Common myeloid progenitor, CD34-positive (primary cell): ENCODE measurements at regions of chr17 and their contacts with region 1.

Region 1: GRCh38 chr17:74864866-74865395 is 5.2 kb upstream of the GRIN2C start:
- DNase-seq: peak; percentile 55 to 76 (median 66)
- H3K4me3 ChIP-seq: no peak overlapping the region
- H3K27ac ChIP-seq: no peak overlapping the region
- H3K4me1 ChIP-seq: peaks cover 0 to 32% (median 20%) of the 10 kb centered on the region in 4 experiments
- H3K27me3 ChIP-seq: peaks cover 0 to 25% (median 12%) of the 10 kb centered on the region in 5 experiments

Region 2: DNA sequence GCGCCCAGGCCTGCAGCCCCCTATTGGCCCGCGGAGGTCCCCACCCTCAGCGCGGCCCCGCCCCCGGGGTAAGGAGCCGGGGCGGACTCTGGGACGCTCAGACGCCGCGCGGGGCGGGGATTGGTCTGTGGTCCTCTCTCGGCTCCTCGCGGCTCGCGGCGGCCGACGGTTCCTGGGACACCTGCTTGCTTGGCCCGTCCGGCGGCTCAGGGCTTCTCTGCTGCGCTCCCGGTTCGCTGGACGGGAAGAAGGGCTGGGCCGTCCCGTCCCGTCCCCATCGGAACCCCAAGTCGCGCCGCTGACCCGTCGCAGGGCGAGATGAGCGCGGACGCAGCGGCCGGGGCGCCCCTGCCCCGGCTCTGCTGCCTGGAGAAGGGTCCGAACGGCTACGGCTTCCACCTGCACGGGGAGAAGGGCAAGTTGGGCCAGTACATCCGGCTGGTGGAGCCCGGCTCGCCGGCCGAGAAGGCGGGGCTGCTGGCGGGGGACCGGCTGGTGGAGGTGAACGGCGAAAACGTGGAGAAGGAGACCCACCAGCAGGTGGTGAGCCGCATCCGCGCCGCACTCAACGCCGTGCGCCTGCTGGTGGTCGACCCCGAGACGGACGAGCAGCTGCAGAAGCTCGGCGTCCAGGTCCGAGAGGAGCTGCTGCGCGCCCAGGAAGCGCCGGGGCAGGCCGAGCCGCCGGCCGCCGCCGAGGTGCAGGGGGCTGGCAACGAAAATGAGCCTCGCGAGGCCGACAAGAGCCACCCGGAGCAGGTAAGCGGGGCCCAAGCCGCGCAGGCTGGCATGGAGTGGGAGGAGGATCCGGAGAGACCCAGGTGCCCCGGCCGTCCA is 116.2 kb before region 1 on chr17 and contains the start of gene NHERF1:
- CTCF ChIA-PET with region 1: interaction called, 15 read pairs
- POLR2A ChIA-PET with region 1: no interaction called
- DNase-seq: peak; percentile 90 to 94 (median 94)
- H3K4me3 ChIP-seq: peak within 1 kb of the TSS; percentile 81 to 98 (median 96)
- H3K27ac ChIP-seq: peak within 1 kb of the TSS; percentile 54 to 81
- H3K4me1 ChIP-seq: peaks cover 18 to 84% (median 80%) of the 10 kb centered on the region in 4 experiments
- H3K27me3 ChIP-seq: no peaks in the 10 kb centered on the region

Region 3: DNA sequence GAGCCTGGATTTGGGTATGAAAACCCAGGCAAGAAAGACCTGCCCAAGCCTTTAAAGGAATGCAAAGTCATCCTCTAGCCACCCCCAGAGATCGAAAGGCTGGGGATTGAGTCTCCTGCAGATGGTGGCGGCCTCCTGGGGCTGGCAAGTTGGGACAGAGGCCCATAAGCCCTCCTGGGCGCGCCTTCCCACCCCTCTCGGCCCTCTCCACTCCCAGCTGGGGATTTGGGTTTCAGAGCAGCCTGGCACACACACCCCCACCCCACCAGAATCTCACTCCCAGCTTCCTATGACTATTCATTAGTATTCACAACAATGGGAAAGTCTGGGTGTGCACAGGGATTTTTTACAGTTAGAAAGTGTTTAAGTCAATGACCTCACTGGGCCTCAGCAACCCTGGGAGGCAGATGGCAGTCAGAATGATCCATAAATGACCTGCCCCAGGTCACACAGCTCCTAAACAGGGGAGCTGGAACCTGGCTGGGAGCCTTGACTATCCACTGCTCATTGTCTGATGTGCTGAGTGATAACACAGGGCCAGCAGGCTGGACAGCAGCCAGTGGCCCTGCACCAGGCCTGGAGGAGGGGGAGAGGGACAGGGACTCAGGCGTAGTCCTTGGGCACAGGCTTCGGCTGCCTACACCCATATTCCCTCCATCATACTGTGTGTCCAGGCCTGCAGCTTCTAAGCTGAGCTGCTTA is 104.4 kb before region 1 on chr17:
- CTCF ChIA-PET with region 1: no interaction called
- POLR2A ChIA-PET with region 1: no interaction called
- DNase-seq: peak in 2 of 3 donors; percentile 46 to 50
- H3K4me3 ChIP-seq: peak overlapping the region in 5 of 7 experiments; percentile 26 to 65 (median 45)
- H3K27ac ChIP-seq: peak overlapping the region; percentile 5 to 76
- H3K4me1 ChIP-seq: peaks cover 8 to 66% (median 60%) of the 10 kb centered on the region in 4 experiments
- H3K27me3 ChIP-seq: no peaks in the 10 kb centered on the region

Region 4: DNA sequence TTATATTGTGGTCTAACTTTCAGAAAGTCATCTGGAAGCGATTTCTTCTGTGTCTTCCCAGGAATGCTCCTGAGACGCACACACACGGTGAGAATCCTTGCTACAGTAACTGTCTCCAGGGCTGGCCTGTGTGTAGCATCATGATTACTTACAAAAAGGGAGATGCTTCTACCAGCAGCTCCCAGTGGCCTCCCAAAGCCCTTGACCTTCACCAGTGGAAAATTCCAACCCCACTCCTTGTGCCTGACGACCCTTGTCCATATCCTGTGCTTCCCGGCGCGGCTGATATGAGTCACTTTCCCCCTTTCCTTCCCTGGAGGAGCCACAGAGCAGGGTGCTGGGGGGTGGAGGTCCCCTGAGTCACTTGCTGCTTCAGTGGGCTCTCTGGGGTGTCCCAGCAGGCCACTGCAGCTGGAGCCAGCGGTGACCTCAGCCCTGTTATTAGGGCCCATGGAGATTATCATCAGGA is 66.7 kb before region 1 on chr17:
- CTCF ChIA-PET with region 1: interaction called, 158 read pairs
- POLR2A ChIA-PET with region 1: no interaction called
- DNase-seq: no peak
- H3K4me3 ChIP-seq: no peak overlapping the region
- H3K27ac ChIP-seq: no peak overlapping the region
- H3K4me1 ChIP-seq: peaks cover 0 to 10% (median 2%) of the 10 kb centered on the region in 4 experiments
- H3K27me3 ChIP-seq: no peaks in the 10 kb centered on the region

Region 5: DNA sequence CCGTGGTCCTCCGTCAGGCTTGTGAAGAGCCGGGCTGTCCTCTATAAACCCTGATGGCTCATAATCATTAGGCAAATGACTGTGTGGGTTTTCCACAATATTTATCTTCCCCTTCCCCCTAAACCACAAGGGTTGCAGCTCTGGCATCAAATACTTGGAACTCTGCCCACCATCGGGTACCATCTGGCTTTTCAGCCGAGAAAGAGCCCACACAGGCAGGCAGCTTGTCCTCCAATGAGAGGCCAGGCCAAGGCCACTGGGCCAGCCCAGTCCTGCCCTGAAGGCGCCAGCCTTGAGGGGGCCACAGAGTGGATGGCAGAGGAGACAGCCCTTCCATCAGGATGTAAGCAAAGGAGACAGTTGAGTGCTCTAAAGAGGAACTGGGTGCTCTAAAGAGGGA is 57.0 kb before region 1 on chr17:
- CTCF ChIA-PET with region 1: interaction called, 24 read pairs
- POLR2A ChIA-PET with region 1: no interaction called
- DNase-seq: peak; percentile 33 to 70 (median 69)
- H3K4me3 ChIP-seq: no peak overlapping the region
- H3K27ac ChIP-seq: no peak overlapping the region
- H3K4me1 ChIP-seq: peaks cover 0 to 22% (median 16%) of the 10 kb centered on the region in 4 experiments
- H3K27me3 ChIP-seq: peaks cover 0 to 7% (median 3%) of the 10 kb centered on the region in 5 experiments

Region 6: DNA sequence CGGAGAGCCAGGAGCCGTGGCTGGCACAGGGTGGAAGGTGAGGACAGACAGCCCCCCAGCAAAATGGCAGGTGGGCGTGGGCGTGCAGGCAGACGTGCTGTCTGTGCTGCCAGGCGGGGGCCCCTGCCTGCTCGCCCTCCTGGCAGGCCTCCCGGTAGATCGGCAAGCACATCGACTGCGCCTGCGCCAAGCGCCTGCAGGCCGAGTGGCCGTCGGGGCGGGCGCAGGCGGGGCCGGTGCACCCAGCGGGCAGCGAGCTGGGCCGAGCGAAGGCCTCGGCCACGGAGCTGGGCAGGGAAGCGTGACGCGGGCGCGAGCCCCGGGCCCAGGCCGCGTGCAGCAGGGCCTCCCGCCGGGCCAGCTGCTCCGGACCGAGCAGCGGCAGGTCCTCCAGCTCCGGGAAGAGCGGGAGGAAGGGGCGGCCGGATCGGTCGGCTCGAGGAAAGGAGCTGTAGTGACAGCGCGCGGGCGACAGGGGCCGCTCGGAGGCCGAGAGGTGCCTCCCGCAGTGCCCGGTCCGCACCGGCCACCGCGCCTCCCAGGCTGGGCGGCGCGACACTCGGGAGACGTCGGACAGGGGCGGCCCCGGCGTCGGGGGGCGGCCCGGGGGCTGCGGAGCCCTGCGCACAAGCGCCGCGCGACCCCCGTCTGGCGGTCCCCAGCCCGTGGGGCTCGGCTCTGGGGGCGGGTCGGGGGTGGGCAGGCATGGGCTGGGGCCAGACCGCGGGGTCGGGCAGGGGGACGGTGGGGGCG is 22.2 kb before region 1 on chr17:
- CTCF ChIA-PET with region 1: interaction called, 21 read pairs
- POLR2A ChIA-PET with region 1: no interaction called
- DNase-seq: peak in 2 of 3 donors; percentile 33 to 37
- H3K4me3 ChIP-seq: peak overlapping the region in 6 of 7 experiments; percentile 7 to 57 (median 40)
- H3K27ac ChIP-seq: no peak overlapping the region
- H3K4me1 ChIP-seq: peaks cover 0 to 28% (median 23%) of the 10 kb centered on the region in 4 experiments
- H3K27me3 ChIP-seq: peaks cover 0 to 40% (median 6%) of the 10 kb centered on the region in 5 experiments

Region 7: DNA sequence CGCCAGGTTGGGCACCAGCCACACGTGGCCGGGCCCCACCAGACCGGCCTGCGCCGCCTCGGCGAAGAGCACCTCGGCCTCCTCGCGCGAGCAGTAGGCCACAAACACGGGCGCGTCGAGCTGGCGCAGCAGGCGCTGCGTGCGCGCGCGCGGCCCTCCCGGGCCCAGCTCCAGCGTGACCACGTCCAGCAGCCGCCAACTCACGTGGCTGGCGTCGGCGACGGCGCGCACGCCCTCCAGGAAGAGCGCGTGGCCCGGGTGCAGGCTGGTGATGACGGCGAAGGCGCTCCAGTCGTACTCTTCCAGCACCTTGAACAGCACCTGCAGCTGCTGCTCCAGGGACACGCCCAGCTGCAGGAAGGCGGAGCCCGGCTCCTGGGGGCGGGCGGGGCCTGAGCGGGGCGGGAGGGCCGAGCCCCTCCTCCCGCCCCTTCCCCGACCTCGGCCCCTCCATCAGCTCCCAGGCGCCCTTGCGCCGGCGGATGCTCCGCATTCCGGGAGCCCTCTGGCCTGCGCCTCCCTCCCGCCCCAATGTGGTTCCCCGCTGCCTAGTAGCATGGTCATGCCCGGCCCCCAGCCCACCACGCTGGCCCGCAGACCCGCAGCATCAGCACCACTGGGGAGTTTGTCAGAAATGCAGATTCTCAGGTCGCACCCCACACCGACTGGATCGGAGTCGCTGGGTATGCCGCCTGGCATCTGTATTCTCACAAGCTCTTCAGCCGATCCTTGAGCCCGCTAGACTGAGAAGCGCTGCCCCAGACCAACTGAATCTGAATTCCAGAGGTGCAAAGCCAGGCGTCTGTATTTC is 12.5 kb before region 1 on chr17:
- CTCF ChIA-PET with region 1: interaction called, 34 read pairs
- POLR2A ChIA-PET with region 1: no interaction called
- DNase-seq: peak; percentile 36 to 79 (median 75)
- H3K4me3 ChIP-seq: peak overlapping the region in 3 of 7 experiments; percentile 1 to 38 (median 4)
- H3K27ac ChIP-seq: no peak overlapping the region
- H3K4me1 ChIP-seq: peaks cover 0 to 9% (median 7%) of the 10 kb centered on the region in 4 experiments
- H3K27me3 ChIP-seq: peaks cover 0 to 80% (median 22%) of the 10 kb centered on the region in 5 experiments

Region 8: GRCh38 chr17:75571197-75571873 is 706.4 kb after region 1 on chr17:
- CTCF ChIA-PET with region 1: no interaction called
- POLR2A ChIA-PET with region 1: no interaction called
- DNase-seq: peak; percentile 95 to 98 (median 95)
- H3K4me3 ChIP-seq: no peak overlapping the region
- H3K27ac ChIP-seq: peak overlapping the region; percentile 61 to 91
- H3K4me1 ChIP-seq: peaks cover 0 to 22% (median 20%) of the 10 kb centered on the region in 4 experiments
- H3K27me3 ChIP-seq: no peaks in the 10 kb centered on the region